ENCODE measurements at regions of chr13 and their contacts with region 1.

Region 1: DNA sequence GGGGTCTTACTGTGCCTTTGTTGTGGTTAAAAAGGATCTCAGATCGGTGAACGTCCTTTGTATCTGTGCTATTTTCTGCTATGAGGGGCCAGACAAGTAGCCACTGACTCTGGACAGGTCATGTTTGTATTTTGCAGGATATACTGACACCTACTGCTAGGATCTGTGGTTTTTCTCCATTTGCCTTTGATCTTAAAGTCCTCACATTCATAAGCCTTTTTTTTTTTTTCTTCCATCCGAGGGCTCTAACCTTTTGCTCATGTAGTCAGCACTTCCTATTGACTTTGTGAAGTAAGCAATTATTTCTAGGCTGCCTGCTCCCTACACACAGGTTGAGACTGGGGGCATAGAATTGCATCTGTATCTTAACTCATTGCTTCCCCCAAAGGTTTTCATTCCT is 106.2 kb downstream of the SLITRK5 start:
- DNase-seq: peak; percentile 63
- ATAC-seq: peak; percentile 92
- H3K4me3 ChIP-seq: no peak overlapping the region
- H3K27ac ChIP-seq: no peak overlapping the region
- H3K4me1 ChIP-seq: peaks cover 10% of the 10 kb centered on the region
- H3K27me3 ChIP-seq: no peaks in the 10 kb centered on the region
- CTCF ChIP-seq: peak; percentile 43
- EP300 ChIP-seq: no peak
- POLR2A ChIP-seq: no peak
- RAD21 ChIP-seq: no peak

Region 2: GRCh38 chr13:86882835-86883234 is 894.6 kb before region 1 on chr13:
- CTCF ChIA-PET with region 1: no interaction called
- POLR2A ChIA-PET with region 1: no interaction called
- in situ Hi-C with region 1: no loop called
- intact Hi-C with region 1: loop called (anchors 10 kb)
- DNase-seq: peak; percentile 7
- ATAC-seq: peak; percentile 64
- H3K4me3 ChIP-seq: no peak overlapping the region
- H3K27ac ChIP-seq: no peak overlapping the region
- H3K4me1 ChIP-seq: no peaks in the 10 kb centered on the region; the same call in 1 of the 2 replicates
- H3K27me3 ChIP-seq: no peaks in the 10 kb centered on the region
- CTCF ChIP-seq: no peak
- EP300 ChIP-seq: no peak; a peak in 1 of 4 replicates
- POLR2A ChIP-seq: no peak
- RAD21 ChIP-seq: no peak

Region 3: GRCh38 chr13:87259551-87259954 is 517.8 kb before region 1 on chr13:
- CTCF ChIA-PET with region 1: no interaction called
- POLR2A ChIA-PET with region 1: no interaction called
- in situ Hi-C with region 1: loop called (anchors 25 kb)
- intact Hi-C with region 1: loop called (anchors 10 kb)
- DNase-seq: peak; percentile 8
- ATAC-seq: peak; percentile 97
- H3K4me3 ChIP-seq: no peak overlapping the region
- H3K27ac ChIP-seq: no peak overlapping the region
- H3K4me1 ChIP-seq: no peaks in the 10 kb centered on the region
- H3K27me3 ChIP-seq: no peaks in the 10 kb centered on the region
- CTCF ChIP-seq: peak; percentile 44
- EP300 ChIP-seq: no peak
- POLR2A ChIP-seq: no peak
- RAD21 ChIP-seq: no peak

Region 4: DNA sequence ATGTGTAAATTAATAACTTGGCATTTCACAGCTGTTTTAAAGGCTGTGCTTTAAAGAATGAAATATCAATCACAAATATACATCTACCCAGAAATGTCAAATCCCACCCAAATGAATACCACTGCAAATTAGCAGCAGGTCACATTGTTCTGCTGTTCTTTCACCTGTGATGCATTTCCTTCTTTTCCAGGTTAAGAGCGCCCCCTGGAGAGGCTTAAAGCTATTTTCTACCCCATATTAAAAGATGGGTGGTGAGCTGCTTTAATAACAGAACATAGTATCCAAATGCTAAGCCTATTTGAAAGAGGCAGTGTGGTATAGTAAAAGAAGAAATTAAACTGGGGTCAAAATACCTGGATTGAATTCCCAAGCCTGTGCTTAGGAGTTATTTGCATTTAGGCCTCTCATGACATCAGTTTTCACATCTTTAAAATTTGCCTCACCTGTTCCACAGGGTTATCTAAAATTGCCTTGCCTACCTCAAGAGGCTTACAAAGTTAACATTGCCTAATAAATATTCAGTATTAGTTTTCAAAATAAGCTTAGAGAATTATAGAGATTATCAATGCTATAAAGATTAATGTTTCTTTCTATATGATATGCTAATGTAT is 503.1 kb before region 1 on chr13:
- CTCF ChIA-PET with region 1: no interaction called
- POLR2A ChIA-PET with region 1: no interaction called
- in situ Hi-C with region 1: loop called (anchors 25 kb)
- intact Hi-C with region 1: no loop called
- DNase-seq: peak; percentile 43
- ATAC-seq: peak; percentile 84
- H3K4me3 ChIP-seq: no peak overlapping the region
- H3K27ac ChIP-seq: no peak overlapping the region
- H3K4me1 ChIP-seq: no peaks in the 10 kb centered on the region
- H3K27me3 ChIP-seq: no peaks in the 10 kb centered on the region
- CTCF ChIP-seq: peak; percentile 69
- EP300 ChIP-seq: no peak
- POLR2A ChIP-seq: no peak
- RAD21 ChIP-seq: no peak